Body of pancreas (tissue), 4 donors: ENCODE measurements at regions of chr10 and their contacts with region 1.

Region 1: DNA sequence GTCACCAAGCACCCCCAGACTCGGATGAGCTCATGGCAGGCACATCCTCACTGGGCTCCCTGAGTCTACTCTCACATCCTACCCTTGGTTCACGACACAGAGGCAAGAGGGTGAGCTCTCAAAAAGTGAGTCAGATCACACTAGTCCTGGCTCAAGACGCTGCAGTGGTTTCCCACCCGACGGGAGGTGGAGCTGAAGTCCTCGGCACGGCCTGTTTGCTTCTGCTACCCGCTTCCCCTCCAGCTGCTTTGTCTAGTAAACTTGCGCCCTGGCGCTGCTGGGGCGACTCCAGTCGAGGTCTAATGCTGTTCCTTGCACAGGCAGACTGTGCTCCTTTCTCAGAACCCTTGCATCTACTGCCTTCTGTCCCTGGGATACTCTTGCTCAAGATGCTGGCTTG is 13.5 kb upstream of the SFMBT2 start:
- DNase-seq: no peak
- ATAC-seq: no peak
- H3K4me3 ChIP-seq: no peak overlapping the region
- H3K27ac ChIP-seq: no peak overlapping the region
- H3K4me1 ChIP-seq: no peaks in the 10 kb centered on the region
- H3K27me3 ChIP-seq: no peaks in the 10 kb centered on the region
- CTCF ChIP-seq: no peak
- POLR2A ChIP-seq: no peak

Region 2: DNA sequence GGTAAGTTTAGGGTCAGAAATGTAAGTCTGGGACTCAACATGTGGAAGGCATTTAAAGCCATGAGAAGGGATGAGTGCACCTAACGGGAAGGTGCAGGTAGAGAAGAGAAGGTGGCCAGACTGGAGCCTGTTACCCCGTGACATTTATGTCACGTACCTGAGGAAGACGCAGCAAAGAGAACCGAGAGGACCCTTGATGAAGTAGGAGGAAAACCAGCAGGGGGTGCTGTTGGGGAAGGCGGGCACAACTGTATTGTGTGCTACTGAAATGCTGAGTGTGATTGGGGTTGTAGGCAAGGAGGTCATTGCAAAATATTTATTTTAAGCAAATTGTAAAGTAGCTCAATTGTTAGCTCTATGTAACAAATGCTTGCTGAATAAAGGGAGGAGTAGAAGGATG is 506.0 kb before region 1 on chr10:
- intact Hi-C with region 1: loop called (anchors 10 kb)
- DNase-seq: peak; percentile 24 to 46 (median 31)
- ATAC-seq: no peak
- H3K4me3 ChIP-seq: no peak overlapping the region
- H3K27ac ChIP-seq: no peak overlapping the region
- H3K4me1 ChIP-seq: peaks cover 11% of the 10 kb centered on the region
- H3K27me3 ChIP-seq: no peaks in the 10 kb centered on the region
- CTCF ChIP-seq: peak in 5 of 7 experiments; percentile 18 to 36 (median 24)
- POLR2A ChIP-seq: no peak